Natural killer cell (primary cell): ENCODE measurements at regions of chr7 and their contacts with region 1.

Region 1: GRCh38 chr7:105013221-105013815 is 687 bp upstream of the KMT2E start:
- DNase-seq: peak; percentile 91 to 95
- ATAC-seq: peak; percentile 52 to 75 (median 53)
- H3K4me3 ChIP-seq: peak overlapping the region; percentile 97
- H3K4me3 Mint-ChIP-seq: peak overlapping the region; percentile 97
- H3K27ac ChIP-seq: peak overlapping the region; percentile 99
- H3K27ac Mint-ChIP-seq: peak overlapping the region; percentile 100
- H3K4me1 ChIP-seq: peaks cover 21% of the 10 kb centered on the region
- H3K4me1 Mint-ChIP-seq: peaks cover 78 to 82% of the 10 kb centered on the region in 2 donors
- H3K27me3 ChIP-seq: no peaks in the 10 kb centered on the region
- H3K27me3 Mint-ChIP-seq: no peaks in the 10 kb centered on the region
- CTCF ChIP-seq: peak; percentile 29

Region 2: GRCh38 chr7:104923010-104923421 is 90.3 kb before region 1 on chr7:
- intact Hi-C with region 1: loop called (anchors 1 kb)
- DNase-seq: peak; percentile 53 to 88
- ATAC-seq: peak; percentile 90 to 98 (median 98)
- H3K4me3 ChIP-seq: no peak overlapping the region
- H3K4me3 Mint-ChIP-seq: no peak overlapping the region
- H3K27ac ChIP-seq: no peak overlapping the region
- H3K27ac Mint-ChIP-seq: peak overlapping the region in 1 of 2 donors; percentile 71
- H3K4me1 ChIP-seq: peaks cover 4% of the 10 kb centered on the region
- H3K4me1 Mint-ChIP-seq: no peaks in the 10 kb centered on the region
- H3K27me3 ChIP-seq: no peaks in the 10 kb centered on the region
- H3K27me3 Mint-ChIP-seq: no peaks in the 10 kb centered on the region
- CTCF ChIP-seq: peak; percentile 77

Region 3: DNA sequence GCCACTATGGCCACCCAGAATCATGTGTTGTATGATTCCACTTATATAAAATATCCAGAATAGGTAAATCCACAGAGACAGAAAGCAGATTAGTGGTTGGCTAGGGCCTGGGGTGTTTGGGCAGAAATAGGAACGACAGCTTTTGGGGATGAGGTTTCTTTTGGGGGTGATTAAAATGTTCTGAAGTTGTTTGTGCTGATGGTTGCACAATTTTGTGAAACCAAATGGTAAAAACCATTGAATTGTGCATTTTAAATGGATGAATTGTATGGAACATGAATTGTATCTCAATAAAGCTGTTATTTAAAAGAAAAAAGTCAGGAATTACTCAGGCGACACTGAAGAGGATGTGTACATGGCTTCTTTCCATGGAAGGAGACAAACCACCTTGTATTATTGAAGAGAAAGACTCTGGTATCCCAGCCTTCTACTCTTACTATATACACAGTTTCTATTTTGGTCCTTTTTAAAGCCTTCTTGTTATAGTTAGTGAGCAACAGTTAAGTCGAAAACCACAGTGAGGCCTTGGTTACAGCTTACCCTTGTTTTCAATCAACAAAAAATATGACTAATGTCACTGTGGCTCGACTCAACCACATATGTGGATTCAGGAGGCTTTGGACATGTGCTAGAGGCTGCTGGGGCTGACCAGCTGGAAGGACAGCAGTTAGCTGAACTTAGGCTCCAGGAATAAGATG is 56.4 kb before region 1 on chr7:
- intact Hi-C with region 1: loop called (anchors 2 kb)
- DNase-seq: peak; percentile 54 to 64
- ATAC-seq: peak; percentile 80 to 90 (median 89)
- H3K4me3 ChIP-seq: no peak overlapping the region
- H3K4me3 Mint-ChIP-seq: peak overlapping the region; percentile 41
- H3K27ac ChIP-seq: peak overlapping the region; percentile 85
- H3K27ac Mint-ChIP-seq: peak overlapping the region; percentile 97 to 100
- H3K4me1 ChIP-seq: peaks cover 29% of the 10 kb centered on the region
- H3K4me1 Mint-ChIP-seq: peaks cover 24 to 28% of the 10 kb centered on the region in 2 donors
- H3K27me3 ChIP-seq: no peaks in the 10 kb centered on the region
- H3K27me3 Mint-ChIP-seq: no peaks in the 10 kb centered on the region
- CTCF ChIP-seq: no peak

Region 4: DNA sequence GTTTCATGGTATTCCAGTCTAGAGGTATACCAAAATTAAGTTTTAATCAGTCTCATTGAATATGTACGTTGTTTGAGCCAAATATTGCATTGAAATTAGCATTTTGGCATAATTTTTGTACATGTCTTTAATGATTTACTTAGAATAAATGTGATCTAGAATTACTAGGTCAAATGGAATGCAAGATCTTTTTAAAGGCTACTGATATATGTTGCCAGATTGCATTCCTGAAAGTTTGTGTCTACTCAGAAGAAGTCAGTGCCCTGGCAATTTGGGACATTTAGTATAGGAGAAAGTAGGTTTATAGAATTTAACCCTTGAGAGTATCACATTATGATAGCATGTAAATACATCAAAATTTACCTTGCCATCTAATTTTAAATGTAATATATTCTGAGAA is 33.1 kb after region 1 on chr7:
- intact Hi-C with region 1: loop called (anchors 5 kb)
- DNase-seq: no peak
- ATAC-seq: no peak
- H3K4me3 ChIP-seq: no peak overlapping the region
- H3K4me3 Mint-ChIP-seq: no peak overlapping the region
- H3K27ac ChIP-seq: no peak overlapping the region
- H3K27ac Mint-ChIP-seq: peak overlapping the region; percentile 10 to 81
- H3K4me1 ChIP-seq: peaks cover 2% of the 10 kb centered on the region
- H3K4me1 Mint-ChIP-seq: peaks cover 44 to 61% of the 10 kb centered on the region in 2 donors
- H3K27me3 ChIP-seq: no peaks in the 10 kb centered on the region
- H3K27me3 Mint-ChIP-seq: no peaks in the 10 kb centered on the region
- CTCF ChIP-seq: no peak

Region 5: GRCh38 chr7:105346593-105347322 is 333.4 kb after region 1 on chr7:
- intact Hi-C with region 1: loop called (anchors 10 kb)
- DNase-seq: peak; percentile 43 to 74
- ATAC-seq: peak; percentile 84 to 93 (median 89)
- H3K4me3 ChIP-seq: no peak overlapping the region
- H3K4me3 Mint-ChIP-seq: peak overlapping the region; percentile 68
- H3K27ac ChIP-seq: peak overlapping the region; percentile 58
- H3K27ac Mint-ChIP-seq: peak overlapping the region; percentile 80 to 83
- H3K4me1 ChIP-seq: peaks cover 68% of the 10 kb centered on the region
- H3K4me1 Mint-ChIP-seq: peaks cover 46 to 62% of the 10 kb centered on the region in 2 donors
- H3K27me3 ChIP-seq: no peaks in the 10 kb centered on the region
- H3K27me3 Mint-ChIP-seq: no peaks in the 10 kb centered on the region
- CTCF ChIP-seq: no peak